Aorta (tissue), 5 donors: ENCODE measurements at regions of chr14 and their contacts with region 1.

Region 1: GRCh38 chr14:22929848-22930364 is 730 bp upstream of the PRMT5 start:
- DNase-seq: no peak
- ATAC-seq: peak; percentile 0
- H3K4me3 ChIP-seq: peak overlapping the region; percentile 37 to 59
- H3K27ac ChIP-seq: peak overlapping the region; percentile 39 to 78
- H3K4me1 ChIP-seq: no peaks in the 10 kb centered on the region
- H3K27me3 ChIP-seq: no peaks in the 10 kb centered on the region

Region 2: GRCh38 chr14:22955702-22956569 is 26.0 kb after region 1 on chr14:
- intact Hi-C with region 1: loop called in 1 of 2 experiments (anchors 2 kb)
- DNase-seq: no peak
- ATAC-seq: no peak
- H3K4me3 ChIP-seq: peak overlapping the region; percentile 76 to 83
- H3K27ac ChIP-seq: peak overlapping the region; percentile 38 to 92
- H3K4me1 ChIP-seq: peaks cover 0 to 6% of the 10 kb centered on the region in 2 donors
- H3K27me3 ChIP-seq: no peaks in the 10 kb centered on the region

Region 3: GRCh38 chr14:22986508-22987054 is 56.7 kb after region 1 on chr14:
- intact Hi-C with region 1: loop called in 1 of 2 experiments (anchors 2 kb)
- DNase-seq: peak; percentile 90 to 93
- ATAC-seq: peak; percentile 70
- H3K4me3 ChIP-seq: no peak overlapping the region
- H3K27ac ChIP-seq: no peak overlapping the region
- H3K4me1 ChIP-seq: no peaks in the 10 kb centered on the region
- H3K27me3 ChIP-seq: no peaks in the 10 kb centered on the region